ENCODE measurements at regions of chr9 and their contacts with region 1.

Region 1: GRCh38 chr9:76658535-76659231 is 105.6 kb upstream of the PCA3 start:
- DNase-seq: peak; percentile 64
- CTCF ChIP-seq: peak; percentile 70

Region 2: GRCh38 chr9:76441551-76442322 is 216.9 kb before region 1 on chr9:
- CTCF ChIA-PET with region 1: interaction called, 45 read pairs
- POLR2A ChIA-PET with region 1: no interaction called
- DNase-seq: peak; percentile 32
- CTCF ChIP-seq: no peak

Region 3: DNA sequence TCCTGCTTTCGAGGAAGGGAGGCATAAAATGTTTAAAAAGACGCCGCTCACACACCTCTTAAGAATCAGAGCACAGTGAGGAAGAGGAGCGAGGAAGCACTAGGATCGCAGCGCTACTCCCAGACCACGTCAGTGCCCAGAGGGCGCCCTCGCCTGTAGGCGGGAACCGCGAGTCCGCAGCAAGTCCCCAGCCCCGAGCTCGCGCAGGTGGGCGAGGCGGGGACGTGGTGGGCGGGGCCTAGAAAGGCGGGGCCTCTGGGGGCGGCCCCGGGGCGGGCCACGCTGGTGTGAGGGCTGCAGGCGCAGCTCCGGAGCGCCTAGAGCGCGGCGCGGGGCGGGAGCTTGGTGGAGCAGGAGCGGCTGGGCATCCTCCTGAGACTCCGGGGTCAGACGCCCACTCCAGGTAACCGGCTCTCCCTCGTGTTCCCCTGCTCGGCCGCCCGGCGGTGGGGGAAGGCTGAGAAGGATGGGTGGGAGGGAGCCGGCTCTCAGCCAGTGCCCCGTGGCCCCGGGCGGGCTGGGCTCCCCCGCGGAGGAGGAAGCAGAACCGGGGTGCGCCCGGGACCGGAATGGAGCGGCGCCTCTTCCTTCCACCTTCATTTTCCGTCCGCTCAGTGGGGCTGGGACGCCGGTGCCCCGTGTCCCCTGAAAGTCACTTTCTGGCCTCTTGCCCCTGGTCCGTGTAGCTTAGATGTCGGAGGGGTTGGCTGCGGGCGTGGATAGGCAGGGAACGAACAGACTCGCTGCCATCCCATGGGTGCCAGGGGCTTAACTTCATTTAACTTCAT is 199.6 kb before region 1 on chr9 and contains the start of gene GCNT1:
- CTCF ChIA-PET with region 1: interaction called, 17 read pairs
- POLR2A ChIA-PET with region 1: no interaction called
- DNase-seq: peak; percentile 95
- CTCF ChIP-seq: peak; percentile 57

Region 4: GRCh38 chr9:76643399-76644117 is 15.1 kb before region 1 on chr9:
- CTCF ChIA-PET with region 1: interaction called, 25 read pairs
- POLR2A ChIA-PET with region 1: no interaction called
- DNase-seq: peak; percentile 49
- CTCF ChIP-seq: no peak

Region 5: DNA sequence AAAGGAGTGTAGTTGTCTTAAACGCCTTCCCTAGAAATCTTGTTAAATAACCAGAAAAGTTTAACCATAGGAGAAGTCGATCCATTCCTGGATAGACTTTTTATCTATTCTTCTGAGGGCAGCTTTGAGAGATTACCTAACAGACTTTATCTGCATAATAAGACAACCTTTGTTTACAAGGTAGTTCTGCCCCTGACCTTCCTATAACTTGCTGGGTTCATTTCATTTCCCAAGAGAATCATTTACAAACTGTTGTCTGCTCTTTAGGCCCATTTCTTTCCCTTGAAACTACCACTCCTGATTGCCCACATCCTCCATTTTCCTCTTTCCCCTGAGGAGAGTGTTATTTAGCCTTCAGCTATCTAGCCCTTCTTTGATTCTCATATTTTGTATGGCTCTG is 452.7 kb after region 1 on chr9:
- CTCF ChIA-PET with region 1: no interaction called
- POLR2A ChIA-PET with region 1: no interaction called
- DNase-seq: no peak
- CTCF ChIP-seq: no peak

Measured in GM10248 (cell line).